ENCODE measurements at regions of chr15 and their contacts with region 1.

Region 1: GRCh38 chr15:69405110-69405509 is 9.0 kb upstream of the KIF23 start:
- DNase-seq: no peak
- H3K4me3 ChIP-seq: no peak overlapping the region
- H3K27ac ChIP-seq: no peak overlapping the region
- H3K4me1 ChIP-seq: no peaks in the 10 kb centered on the region
- H3K27me3 ChIP-seq: no peaks in the 10 kb centered on the region

Region 2: DNA sequence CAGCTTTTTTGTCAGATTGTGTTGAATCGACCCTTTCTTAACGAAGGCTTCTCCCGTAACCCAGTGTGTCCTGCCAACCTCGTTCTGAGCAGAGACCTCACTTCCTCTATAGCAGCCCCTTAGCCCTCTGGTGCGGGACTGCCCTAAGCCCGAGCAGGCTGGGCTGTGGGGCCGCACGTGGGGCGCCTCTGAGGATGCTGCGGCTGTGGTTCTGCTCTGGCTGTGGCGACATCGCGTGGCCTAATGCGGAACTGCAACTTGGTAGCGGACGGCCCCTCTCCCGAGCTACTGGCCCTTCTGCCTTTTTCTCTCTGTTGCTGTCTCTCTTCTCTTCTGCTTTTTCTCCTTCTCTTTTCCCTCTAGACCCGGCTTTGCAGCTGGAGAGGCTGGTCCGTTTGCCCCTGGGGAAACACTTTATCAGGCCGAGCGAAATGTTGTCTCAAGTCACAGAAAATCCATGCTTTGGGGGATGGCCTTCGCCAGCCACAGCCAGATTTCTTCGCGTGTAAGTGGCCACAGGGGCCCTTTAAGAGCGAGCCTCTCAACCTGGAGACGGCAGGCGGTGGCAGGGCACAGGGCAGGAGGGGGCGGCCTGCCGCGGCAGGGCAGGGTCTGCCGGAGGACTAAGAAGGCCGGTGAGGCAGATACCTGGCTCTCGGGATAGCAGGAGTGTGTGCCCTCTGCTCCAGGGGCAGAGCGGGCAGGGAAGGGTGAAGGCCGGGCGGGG is 10.4 kb before region 1 on chr15:
- CTCF ChIA-PET with region 1: interaction called, 12 read pairs
- POLR2A ChIA-PET with region 1: no interaction called
- DNase-seq: peak; percentile 78 to 90 (median 89)
- H3K4me3 ChIP-seq: peak overlapping the region in 1 of 7 experiments; percentile 37
- H3K27ac ChIP-seq: no peak overlapping the region
- H3K4me1 ChIP-seq: peaks cover 0 to 32% (median 27%) of the 10 kb centered on the region in 4 experiments
- H3K27me3 ChIP-seq: no peaks in the 10 kb centered on the region

Measured in common myeloid progenitor, CD34-positive (primary cell).